Mucosa of descending colon (tissue), 3 donors: ENCODE measurements at regions of chr1 and their contacts with region 1.

Region 1: GRCh38 chr1:38834937-38835827 is 24.4 kb downstream of the RRAGC start:
- DNase-seq: peak in 1 of 3 donors; percentile 83
- ATAC-seq: peak; percentile 95
- H3K4me3 ChIP-seq: no peak overlapping the region
- H3K4me1 ChIP-seq: no peaks in the 10 kb centered on the region
- CTCF ChIP-seq: peak; percentile 39

Region 2: DNA sequence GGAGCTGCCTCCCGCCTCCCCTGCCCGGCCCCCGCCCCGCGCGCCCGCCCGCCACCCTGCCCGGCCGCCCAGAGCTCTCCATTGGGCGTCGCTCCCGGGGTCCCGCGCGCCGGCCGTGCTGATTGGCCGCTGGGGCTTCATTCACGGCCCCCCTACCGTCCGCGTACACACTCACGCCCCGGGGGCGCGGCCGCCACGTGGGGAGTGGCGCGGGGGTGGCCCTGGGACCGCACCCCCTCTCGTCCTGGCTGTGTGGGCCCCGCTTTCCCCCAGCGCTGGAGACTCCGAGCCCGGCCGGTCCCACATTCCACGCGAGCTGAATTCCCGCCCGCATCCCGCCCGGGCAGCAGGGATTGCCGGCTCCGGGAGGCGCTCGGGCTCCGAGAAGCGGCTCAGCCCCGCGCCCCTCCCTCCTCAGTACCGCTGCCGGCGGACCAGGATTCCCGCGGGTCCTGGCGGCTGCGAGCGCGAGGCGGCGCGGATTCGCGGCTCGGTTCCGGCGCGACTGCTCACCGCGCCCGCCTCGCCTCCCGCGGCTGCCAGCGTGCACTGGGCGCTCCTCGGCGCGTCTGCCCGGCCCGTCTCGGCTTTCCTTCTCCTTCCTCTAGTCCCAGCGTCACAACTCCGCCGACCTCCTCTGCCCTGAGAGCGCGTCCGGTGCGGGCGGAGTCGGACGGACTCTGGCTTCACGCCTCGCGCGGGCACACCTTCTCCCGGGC is 788.1 kb before region 1 on chr1:
- intact Hi-C with region 1: loop called in 1 of 2 experiments (anchors 10 kb)
- DNase-seq: peak; percentile 73 to 85 (median 80)
- ATAC-seq: peak; percentile 91
- H3K4me3 ChIP-seq: no peak overlapping the region
- H3K4me1 ChIP-seq: peaks cover 11% of the 10 kb centered on the region
- CTCF ChIP-seq: no peak